ENCODE measurements at regions of chr13 and their contacts with region 1.

Region 1: GRCh38 chr13:73496711-73497110 is 437.9 kb downstream of the KLF5 start:
- DNase-seq: peak in 1 of 2 experiments; percentile 66
- H3K4me3 ChIP-seq: no peak overlapping the region
- H3K27ac ChIP-seq: no peak overlapping the region
- H3K4me1 ChIP-seq: peaks cover 14% of the 10 kb centered on the region
- H3K27me3 ChIP-seq: no peaks in the 10 kb centered on the region
- CTCF ChIP-seq: no peak

Region 2: DNA sequence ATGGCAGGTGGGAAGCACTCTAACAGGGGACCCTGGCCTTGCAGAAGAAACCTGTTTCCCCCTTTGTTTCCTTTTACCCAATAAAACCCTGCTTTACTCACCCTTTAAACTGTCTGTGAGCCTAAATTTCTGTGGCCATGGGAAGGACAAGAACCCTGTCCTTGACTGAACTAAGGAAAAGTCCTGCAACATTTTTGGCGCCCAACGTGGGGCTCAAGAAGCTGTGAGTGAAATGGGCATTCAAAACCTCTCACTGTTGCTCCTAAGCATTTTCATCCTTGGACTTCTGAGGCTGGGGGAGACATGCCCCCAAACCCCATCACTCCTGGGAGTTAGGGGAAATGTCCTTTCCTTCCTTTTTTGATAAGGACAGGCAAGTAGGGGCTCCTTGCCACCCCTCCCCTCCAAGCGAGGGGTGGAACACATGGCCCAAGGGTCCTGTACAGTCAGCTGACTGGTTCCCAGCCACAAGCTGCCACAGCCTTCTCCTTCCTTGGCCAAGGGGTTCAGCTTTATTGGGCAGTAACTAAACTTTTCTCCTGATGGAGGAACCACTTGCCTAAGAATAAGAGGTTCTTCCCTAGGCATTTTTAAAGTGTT is 56.3 kb before region 1 on chr13:
- CTCF ChIA-PET with region 1: no interaction called
- POLR2A ChIA-PET with region 1: no interaction called
- intact Hi-C with region 1: no loop called
- DNase-seq: no peak
- H3K4me3 ChIP-seq: no peak overlapping the region
- H3K27ac ChIP-seq: no peak overlapping the region
- H3K4me1 ChIP-seq: no peaks in the 10 kb centered on the region
- H3K27me3 ChIP-seq: no peaks in the 10 kb centered on the region
- CTCF ChIP-seq: no peak

Region 3: DNA sequence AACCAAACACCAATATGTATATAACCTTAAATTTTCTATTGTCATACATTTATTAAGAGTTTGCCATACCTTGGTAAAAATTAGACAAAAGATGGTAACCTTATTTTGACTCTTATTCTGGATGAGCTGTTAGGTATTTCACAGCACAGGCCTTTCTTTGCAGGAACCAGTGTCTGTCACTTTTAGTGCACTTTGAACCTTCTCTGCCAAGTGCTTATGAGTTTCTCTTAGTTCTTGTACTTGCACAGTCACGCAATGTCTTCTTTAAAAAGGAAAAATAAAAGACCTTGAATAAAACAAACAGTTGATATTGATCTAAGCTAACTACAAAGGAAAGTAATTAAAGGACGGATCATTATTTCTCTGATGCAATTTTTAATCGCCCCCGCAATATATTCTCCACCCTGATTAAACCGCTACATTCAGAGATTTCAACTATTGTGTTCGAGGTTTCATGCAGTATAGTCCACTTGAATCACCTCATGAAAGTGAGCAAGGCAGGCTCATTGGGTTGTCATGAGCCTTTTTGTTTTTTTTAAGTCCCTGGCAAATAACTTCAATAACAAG is 96.6 kb after region 1 on chr13:
- CTCF ChIA-PET with region 1: interaction called, 15 read pairs
- POLR2A ChIA-PET with region 1: no interaction called
- intact Hi-C with region 1: no loop called
- DNase-seq: no peak
- H3K4me3 ChIP-seq: no peak overlapping the region
- H3K27ac ChIP-seq: no peak overlapping the region
- H3K4me1 ChIP-seq: peaks cover 14% of the 10 kb centered on the region
- H3K27me3 ChIP-seq: no peaks in the 10 kb centered on the region
- CTCF ChIP-seq: no peak

Region 4: GRCh38 chr13:73657821-73658540 is 161.3 kb after region 1 on chr13:
- CTCF ChIA-PET with region 1: no interaction called
- POLR2A ChIA-PET with region 1: no interaction called
- intact Hi-C with region 1: no loop called
- DNase-seq: no peak
- H3K4me3 ChIP-seq: no peak overlapping the region
- H3K27ac ChIP-seq: no peak overlapping the region
- H3K4me1 ChIP-seq: no peaks in the 10 kb centered on the region
- H3K27me3 ChIP-seq: no peaks in the 10 kb centered on the region
- CTCF ChIP-seq: no peak

Measured in PC-9 (cell line).